B cell (primary cell): ENCODE measurements at regions of chr4 and their contacts with region 1.

Region 1: DNA sequence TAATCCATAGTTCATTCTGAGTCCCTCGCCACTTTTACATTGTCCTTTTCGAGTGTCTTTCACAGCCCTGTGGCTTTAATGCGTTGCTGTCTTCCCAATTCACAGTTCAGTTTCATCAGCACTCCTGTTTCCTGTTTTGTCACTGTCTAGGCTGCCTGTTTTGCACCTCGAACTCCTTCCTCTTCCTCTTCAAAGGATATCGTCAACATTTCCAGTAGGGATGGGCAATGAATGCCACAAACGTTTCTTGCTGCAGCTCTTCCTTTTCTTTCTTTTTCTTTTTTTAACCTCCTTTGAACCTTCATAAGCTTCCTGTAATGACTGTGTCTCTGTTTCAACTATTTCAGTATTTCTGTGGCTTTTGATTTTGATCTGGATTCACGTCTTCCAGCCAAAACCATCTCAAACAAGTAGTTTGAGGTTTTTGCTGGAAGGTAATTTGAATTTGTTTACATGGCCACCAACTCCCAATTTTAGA is 105.4 kb downstream of the ANXA3 start:
- DNase-seq: no peak
- ATAC-seq: no peak
- H3K4me3 ChIP-seq: peak overlapping the region in 4 of 5 experiments; percentile 8 to 52 (median 29)
- H3K4me3 Mint-ChIP-seq: peak overlapping the region; percentile 72
- H3K27ac ChIP-seq: peak overlapping the region; percentile 47 to 76
- H3K27ac Mint-ChIP-seq: peak overlapping the region; percentile 67
- H3K4me1 ChIP-seq: peaks cover 38 to 43% of the 10 kb centered on the region in 2 donors
- H3K4me1 Mint-ChIP-seq: peaks cover 45% of the 10 kb centered on the region
- H3K27me3 ChIP-seq: no peaks in the 10 kb centered on the region
- H3K27me3 Mint-ChIP-seq: no peaks in the 10 kb centered on the region
- CTCF ChIP-seq: no peak

Region 2: DNA sequence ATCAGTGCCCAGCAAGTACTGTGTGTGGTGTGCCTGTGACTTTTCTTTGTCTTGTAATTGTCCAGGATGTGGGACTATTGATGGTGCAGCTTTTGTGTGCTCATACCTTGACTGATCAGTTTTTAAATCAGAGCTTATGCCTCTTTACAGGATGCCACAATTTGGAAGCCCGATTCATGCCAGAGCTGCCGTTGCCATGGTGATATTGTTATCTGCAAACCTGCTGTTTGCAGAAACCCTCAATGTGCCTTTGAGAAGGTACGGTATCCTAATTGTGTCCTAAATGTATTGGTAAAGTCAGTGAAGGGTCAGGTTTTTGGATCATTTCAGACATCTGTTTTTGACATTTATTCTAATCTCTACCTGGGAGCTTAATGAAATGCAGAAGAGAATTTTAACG is 419.6 kb before region 1 on chr4:
- CTCF ChIA-PET with region 1: no interaction called
- POLR2A ChIA-PET with region 1: no interaction called
- intact Hi-C with region 1: no loop called
- DNase-seq: no peak
- ATAC-seq: no peak
- H3K4me3 ChIP-seq: no peak overlapping the region
- H3K4me3 Mint-ChIP-seq: no peak overlapping the region
- H3K27ac ChIP-seq: no peak overlapping the region
- H3K27ac Mint-ChIP-seq: no peak overlapping the region
- H3K4me1 ChIP-seq: no peaks in the 10 kb centered on the region
- H3K4me1 Mint-ChIP-seq: no peaks in the 10 kb centered on the region
- H3K27me3 ChIP-seq: peaks cover 0 to 9% (median 0%) of the 10 kb centered on the region in 4 experiments
- H3K27me3 Mint-ChIP-seq: peaks cover 8% of the 10 kb centered on the region
- CTCF ChIP-seq: no peak

Region 3: GRCh38 chr4:78667764-78668163 is 10.8 kb after region 1 on chr4:
- CTCF ChIA-PET with region 1: interaction called, 5 read pairs
- POLR2A ChIA-PET with region 1: interaction called, 6 read pairs
- intact Hi-C with region 1: loop called (anchors 2 kb)
- DNase-seq: peak; percentile 47
- ATAC-seq: peak; percentile 62
- H3K4me3 ChIP-seq: peak overlapping the region in 2 of 5 experiments; percentile 26 to 28
- H3K4me3 Mint-ChIP-seq: peak overlapping the region; percentile 80
- H3K27ac ChIP-seq: peak overlapping the region; percentile 50 to 73
- H3K27ac Mint-ChIP-seq: peak overlapping the region; percentile 85
- H3K4me1 ChIP-seq: peaks cover 75 to 78% of the 10 kb centered on the region in 2 donors
- H3K4me1 Mint-ChIP-seq: peaks cover 88% of the 10 kb centered on the region
- H3K27me3 ChIP-seq: no peaks in the 10 kb centered on the region
- H3K27me3 Mint-ChIP-seq: no peaks in the 10 kb centered on the region
- CTCF ChIP-seq: no peak

Region 4: GRCh38 chr4:78809928-78810835 is 153.2 kb after region 1 on chr4:
- CTCF ChIA-PET with region 1: no interaction called
- POLR2A ChIA-PET with region 1: no interaction called
- intact Hi-C with region 1: no loop called
- DNase-seq: no peak
- ATAC-seq: no peak
- H3K4me3 ChIP-seq: no peak overlapping the region
- H3K4me3 Mint-ChIP-seq: peak overlapping the region; percentile 49
- H3K27ac ChIP-seq: peak overlapping the region in 1 of 2 donors; percentile 40
- H3K27ac Mint-ChIP-seq: peak overlapping the region; percentile 15
- H3K4me1 ChIP-seq: peaks cover 12 to 39% of the 10 kb centered on the region in 2 donors
- H3K4me1 Mint-ChIP-seq: peaks cover 59% of the 10 kb centered on the region
- H3K27me3 ChIP-seq: no peaks in the 10 kb centered on the region
- H3K27me3 Mint-ChIP-seq: no peaks in the 10 kb centered on the region
- CTCF ChIP-seq: no peak